ENCODE measurements at regions of chr6 and their contacts with region 1.

Region 1: DNA sequence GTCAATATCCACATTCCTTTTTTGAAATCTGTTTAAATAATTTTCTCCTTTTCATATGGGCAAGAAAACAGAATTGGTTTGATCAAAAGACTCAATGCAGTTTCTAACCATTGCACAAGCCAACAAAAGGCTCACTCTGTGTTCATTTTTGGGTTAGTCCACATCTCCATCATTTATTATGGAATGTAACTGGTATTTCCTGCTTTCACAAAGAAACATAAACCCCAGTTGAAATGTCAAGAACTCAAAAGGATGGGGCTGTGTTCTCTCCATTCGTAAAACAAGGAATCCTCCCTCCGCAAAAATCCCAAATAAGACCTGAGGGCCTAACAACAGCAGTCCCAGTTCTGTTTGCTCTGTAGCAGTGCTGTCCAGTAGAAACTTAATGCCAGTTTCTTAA is 420.9 kb downstream of the GJA1 start:
- DNase-seq: no peak
- H3K4me3 ChIP-seq: no peak overlapping the region
- H3K4me3 Mint-ChIP-seq: no peak overlapping the region
- H3K27ac Mint-ChIP-seq: no peak overlapping the region
- H3K4me1 ChIP-seq: peaks cover 28% of the 10 kb centered on the region
- H3K4me1 Mint-ChIP-seq: peaks cover 38% of the 10 kb centered on the region
- H3K27me3 ChIP-seq: no peaks in the 10 kb centered on the region
- H3K27me3 Mint-ChIP-seq: no peaks in the 10 kb centered on the region
- CTCF ChIP-seq: no peak

Region 2: DNA sequence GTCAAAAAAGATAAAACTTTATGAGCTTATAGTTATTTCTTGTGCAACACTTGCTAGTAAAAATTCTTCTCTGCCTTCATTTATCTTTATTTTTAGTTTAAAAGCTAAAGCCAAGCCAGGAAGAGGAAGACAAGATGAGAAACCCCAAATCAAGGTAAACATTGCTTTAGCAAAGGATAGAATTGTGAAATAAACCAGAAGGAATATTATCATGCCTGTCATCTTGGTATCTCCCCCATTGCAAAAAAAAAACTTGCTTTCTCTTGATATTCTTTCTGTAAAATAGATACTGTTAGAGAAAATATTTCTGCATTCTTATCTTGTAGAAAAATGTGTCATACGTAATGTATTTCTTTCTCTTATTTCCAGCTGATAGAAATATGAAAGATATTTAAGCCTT is 11.9 kb after region 1 on chr6:
- CTCF ChIA-PET with region 1: no interaction called
- POLR2A ChIA-PET with region 1: no interaction called
- intact Hi-C with region 1: loop called (anchors 1 kb)
- DNase-seq: no peak
- H3K4me3 ChIP-seq: no peak overlapping the region
- H3K4me3 Mint-ChIP-seq: no peak overlapping the region
- H3K27ac Mint-ChIP-seq: no peak overlapping the region
- H3K4me1 ChIP-seq: peaks cover 34% of the 10 kb centered on the region
- H3K4me1 Mint-ChIP-seq: peaks cover 22% of the 10 kb centered on the region
- H3K27me3 ChIP-seq: no peaks in the 10 kb centered on the region
- H3K27me3 Mint-ChIP-seq: no peaks in the 10 kb centered on the region
- CTCF ChIP-seq: no peak

Region 3: DNA sequence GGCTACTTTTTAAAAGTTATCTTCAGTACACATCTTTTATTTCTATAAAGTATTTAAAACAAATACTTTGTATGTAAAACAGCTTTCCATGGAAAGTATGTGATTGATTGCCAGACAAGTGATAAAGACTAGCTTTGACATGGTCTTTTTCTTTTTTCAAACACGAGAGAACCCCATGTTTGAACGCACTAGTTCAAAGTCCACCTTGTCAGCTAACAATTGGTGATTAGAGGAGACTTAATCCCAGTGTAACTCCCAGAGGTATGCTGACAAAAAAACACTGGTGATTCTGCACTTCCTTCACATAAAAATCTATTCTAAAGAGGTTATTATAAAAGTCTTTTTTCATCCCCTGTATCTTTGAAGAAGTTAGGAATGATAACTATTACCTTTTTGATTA is 17.3 kb after region 1 on chr6:
- CTCF ChIA-PET with region 1: no interaction called
- POLR2A ChIA-PET with region 1: no interaction called
- intact Hi-C with region 1: loop called (anchors 1 kb)
- DNase-seq: peak in 1 of 2 experiments; percentile 50
- H3K4me3 ChIP-seq: no peak overlapping the region
- H3K4me3 Mint-ChIP-seq: no peak overlapping the region
- H3K27ac Mint-ChIP-seq: no peak overlapping the region
- H3K4me1 ChIP-seq: peaks cover 21% of the 10 kb centered on the region
- H3K4me1 Mint-ChIP-seq: peaks cover 8% of the 10 kb centered on the region
- H3K27me3 ChIP-seq: no peaks in the 10 kb centered on the region
- H3K27me3 Mint-ChIP-seq: no peaks in the 10 kb centered on the region
- CTCF ChIP-seq: no peak

Region 4: DNA sequence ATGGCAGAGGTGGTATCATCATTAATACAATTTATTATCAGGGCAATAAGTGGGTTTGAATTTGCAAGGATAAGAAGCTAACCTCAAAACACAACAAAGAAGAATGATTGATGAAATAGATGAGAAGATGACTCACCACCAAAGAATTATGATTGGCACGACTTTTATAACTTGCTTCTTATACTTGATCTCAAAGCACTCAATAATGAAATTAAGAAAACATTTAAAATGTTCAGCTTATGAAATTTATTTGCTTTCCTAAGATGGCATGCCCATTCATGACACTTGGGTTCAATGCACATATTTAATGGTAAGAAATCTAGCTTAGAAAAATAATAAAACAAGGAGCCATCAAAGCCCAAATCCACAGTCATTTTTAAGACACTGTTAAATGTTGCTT is 56.6 kb after region 1 on chr6:
- CTCF ChIA-PET with region 1: no interaction called
- POLR2A ChIA-PET with region 1: no interaction called
- intact Hi-C with region 1: loop called (anchors 2 kb)
- DNase-seq: no peak
- H3K4me3 ChIP-seq: no peak overlapping the region
- H3K4me3 Mint-ChIP-seq: no peak overlapping the region
- H3K27ac Mint-ChIP-seq: no peak overlapping the region
- H3K4me1 ChIP-seq: no peaks in the 10 kb centered on the region
- H3K4me1 Mint-ChIP-seq: no peaks in the 10 kb centered on the region
- H3K27me3 ChIP-seq: no peaks in the 10 kb centered on the region
- H3K27me3 Mint-ChIP-seq: no peaks in the 10 kb centered on the region
- CTCF ChIP-seq: no peak

Region 5: DNA sequence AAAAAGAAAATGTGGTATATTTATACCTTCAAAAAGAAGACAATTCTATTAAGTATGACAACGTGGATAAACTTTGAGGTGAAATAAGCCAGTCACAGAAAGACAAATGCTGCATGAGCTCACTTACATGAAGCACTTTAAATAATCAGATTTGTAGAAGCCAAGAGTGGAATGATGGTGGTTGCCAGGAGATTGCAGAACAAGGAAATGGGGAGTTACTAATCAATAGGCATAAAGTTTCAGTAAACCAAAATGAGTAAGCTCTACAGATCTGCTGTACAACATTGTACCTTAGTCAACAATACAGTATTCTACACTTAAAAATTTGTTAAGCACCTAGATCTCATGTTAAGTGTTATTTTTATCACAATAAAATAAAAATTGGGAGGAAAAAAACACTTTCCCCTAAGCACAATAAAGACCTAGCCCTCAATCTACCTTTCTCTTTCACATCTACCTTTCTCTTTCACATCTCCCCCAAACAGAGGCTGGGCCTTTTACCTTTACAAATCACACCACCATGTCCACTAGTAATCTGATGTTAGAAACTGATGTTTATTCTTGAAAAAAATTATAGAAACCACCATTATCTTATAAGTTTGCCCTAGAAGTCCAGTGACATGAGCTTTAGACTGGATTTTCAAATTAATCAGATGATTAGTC is 827.8 kb after region 1 on chr6:
- CTCF ChIA-PET with region 1: no interaction called
- POLR2A ChIA-PET with region 1: no interaction called
- intact Hi-C with region 1: no loop called
- DNase-seq: no peak
- H3K4me3 ChIP-seq: no peak overlapping the region
- H3K4me3 Mint-ChIP-seq: no peak overlapping the region
- H3K27ac Mint-ChIP-seq: no peak overlapping the region
- H3K4me1 ChIP-seq: no peaks in the 10 kb centered on the region
- H3K4me1 Mint-ChIP-seq: peaks cover 4% of the 10 kb centered on the region
- H3K27me3 ChIP-seq: no peaks in the 10 kb centered on the region
- H3K27me3 Mint-ChIP-seq: no peaks in the 10 kb centered on the region
- CTCF ChIP-seq: no peak